ENCODE measurements at regions of chr15 and their contacts with region 1.

Region 1: GRCh38 chr15:86743283-86743903 is 663.7 kb downstream of the AGBL1 start:
- DNase-seq: peak; percentile 6 to 51 (median 25)
- ATAC-seq: no peak
- H3K4me3 ChIP-seq: no peak overlapping the region
- H3K4me3 Mint-ChIP-seq: no peak overlapping the region
- H3K27ac ChIP-seq: no peak overlapping the region
- H3K27ac Mint-ChIP-seq: no peak overlapping the region
- H3K4me1 ChIP-seq: no peaks in the 10 kb centered on the region
- H3K4me1 Mint-ChIP-seq: no peaks in the 10 kb centered on the region
- H3K27me3 ChIP-seq: no peaks in the 10 kb centered on the region
- H3K27me3 Mint-ChIP-seq: peaks cover 0 to 3% (median 0%) of the 10 kb centered on the region in 5 donors

Region 2: DNA sequence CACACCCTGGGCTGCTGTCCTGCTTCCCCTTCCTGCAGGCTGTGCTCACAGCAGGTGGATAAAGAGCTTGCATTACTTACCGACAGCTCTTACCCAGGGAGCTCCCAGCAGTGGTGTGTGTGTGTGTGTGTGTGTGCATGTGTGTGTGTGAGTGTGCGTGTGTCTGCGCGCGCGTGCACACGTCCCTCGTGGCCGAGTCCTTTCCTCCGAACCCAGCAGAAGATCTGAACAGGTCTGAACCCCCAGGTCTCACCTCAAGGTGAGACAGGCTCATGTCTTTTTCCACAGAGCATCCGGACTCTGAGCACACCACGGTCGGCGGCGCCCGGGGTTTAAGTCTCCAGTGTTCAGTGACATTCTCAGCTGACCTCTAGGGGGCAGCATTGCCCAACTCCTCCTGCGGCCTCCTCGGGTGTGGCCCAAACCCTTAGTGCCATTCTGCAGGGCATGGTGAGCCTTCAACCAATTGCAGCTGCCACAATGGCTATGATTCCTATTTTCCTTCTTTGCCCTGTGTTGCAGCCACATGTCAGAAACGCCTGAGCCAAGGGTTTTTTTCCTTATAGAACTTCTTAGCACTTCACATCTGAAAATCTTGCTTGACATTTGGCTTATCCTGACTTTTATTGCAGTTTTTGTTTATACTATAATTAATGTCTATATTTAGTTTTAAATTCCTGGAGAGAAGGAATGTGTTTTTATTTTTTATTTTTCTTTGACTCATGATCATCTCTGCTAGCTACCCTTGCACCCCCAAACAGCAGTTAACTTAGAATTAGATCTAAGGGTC is 884.6 kb before region 1 on chr15:
- CTCF ChIA-PET with region 1: interaction called, 6 read pairs
- POLR2A ChIA-PET with region 1: no interaction called
- intact Hi-C with region 1: loop called (anchors 2 to 5 kb)
- DNase-seq: peak; percentile 48 to 77 (median 69)
- ATAC-seq: peak; percentile 91
- H3K4me3 ChIP-seq: no peak overlapping the region
- H3K4me3 Mint-ChIP-seq: peak overlapping the region in 8 of 10 donors; percentile 27 to 83 (median 45)
- H3K27ac ChIP-seq: no peak overlapping the region
- H3K27ac Mint-ChIP-seq: peak overlapping the region in 2 of 9 donors; percentile 52 to 65
- H3K4me1 ChIP-seq: peaks cover 0 to 7% of the 10 kb centered on the region in 2 donors
- H3K4me1 Mint-ChIP-seq: peaks cover 0 to 21% (median 4%) of the 10 kb centered on the region in 7 donors
- H3K27me3 ChIP-seq: no peaks in the 10 kb centered on the region
- H3K27me3 Mint-ChIP-seq: peaks cover 18 to 33% (median 27%) of the 10 kb centered on the region in 5 donors

Region 3: GRCh38 chr15:86079508-86080266 is 663.7 kb before region 1 on chr15 and contains the start of gene AGBL1:
- CTCF ChIA-PET with region 1: no interaction called
- POLR2A ChIA-PET with region 1: no interaction called
- intact Hi-C with region 1: no loop called
- DNase-seq: no peak
- ATAC-seq: no peak
- H3K4me3 ChIP-seq: no peak within 1 kb of the TSS
- H3K4me3 Mint-ChIP-seq: no peak within 1 kb of the TSS
- H3K27ac ChIP-seq: no peak within 1 kb of the TSS
- H3K27ac Mint-ChIP-seq: no peak within 1 kb of the TSS
- H3K4me1 ChIP-seq: peaks cover 0 to 21% of the 10 kb centered on the region in 2 donors
- H3K4me1 Mint-ChIP-seq: peaks cover 0 to 26% (median 25%) of the 10 kb centered on the region in 7 donors
- H3K27me3 ChIP-seq: no peaks in the 10 kb centered on the region
- H3K27me3 Mint-ChIP-seq: peaks cover 5 to 26% (median 6%) of the 10 kb centered on the region in 5 donors
- total RNA-seq, gene AGBL1: not detected

Region 4: GRCh38 chr15:86624261-86625036 is 118.9 kb before region 1 on chr15:
- CTCF ChIA-PET with region 1: no interaction called
- POLR2A ChIA-PET with region 1: no interaction called
- intact Hi-C with region 1: loop called (anchors 1 kb)
- DNase-seq: peak in 2 of 9 donors; percentile 9 to 66
- ATAC-seq: peak; percentile 85
- H3K4me3 ChIP-seq: no peak overlapping the region
- H3K4me3 Mint-ChIP-seq: peak overlapping the region in 1 of 10 donors; percentile 15
- H3K27ac ChIP-seq: no peak overlapping the region
- H3K27ac Mint-ChIP-seq: no peak overlapping the region
- H3K4me1 ChIP-seq: peaks cover 0 to 10% of the 10 kb centered on the region in 2 donors
- H3K4me1 Mint-ChIP-seq: peaks cover 7 to 29% (median 18%) of the 10 kb centered on the region in 7 donors
- H3K27me3 ChIP-seq: no peaks in the 10 kb centered on the region
- H3K27me3 Mint-ChIP-seq: peaks cover 0 to 4% (median 0%) of the 10 kb centered on the region in 5 donors

Region 5: GRCh38 chr15:86650093-86650492 is 93.3 kb before region 1 on chr15:
- CTCF ChIA-PET with region 1: no interaction called
- POLR2A ChIA-PET with region 1: no interaction called
- intact Hi-C with region 1: loop called in 1 of 2 experiments (anchors 10 kb)
- DNase-seq: no peak
- ATAC-seq: no peak
- H3K4me3 ChIP-seq: no peak overlapping the region
- H3K4me3 Mint-ChIP-seq: no peak overlapping the region
- H3K27ac ChIP-seq: no peak overlapping the region
- H3K27ac Mint-ChIP-seq: no peak overlapping the region
- H3K4me1 ChIP-seq: peaks cover 37 to 50% of the 10 kb centered on the region in 2 donors
- H3K4me1 Mint-ChIP-seq: peaks cover 24 to 63% (median 52%) of the 10 kb centered on the region in 7 donors
- H3K27me3 ChIP-seq: no peaks in the 10 kb centered on the region
- H3K27me3 Mint-ChIP-seq: peaks cover 0 to 2% (median 0%) of the 10 kb centered on the region in 5 donors

Measured in naive thymus-derived CD4-positive, alpha-beta T cell (primary cell).